CD4-positive, alpha-beta memory T cell (primary cell): ENCODE measurements at regions of chr5 and their contacts with region 1.

Region 1: GRCh38 chr5:160021831-160022446 is 13.0 kb downstream of the TTC1 start:
- DNase-seq: peak; percentile 58 to 70 (median 67)
- H3K4me3 ChIP-seq: no peak overlapping the region
- H3K4me3 Mint-ChIP-seq: peak overlapping the region in 5 of 8 donors; percentile 5 to 76 (median 55)
- H3K27ac ChIP-seq: no peak overlapping the region
- H3K27ac Mint-ChIP-seq: peak overlapping the region; percentile 39 to 95 (median 85)
- H3K4me1 ChIP-seq: peaks cover 21% of the 10 kb centered on the region
- H3K4me1 Mint-ChIP-seq: peaks cover 20 to 40% (median 30%) of the 10 kb centered on the region in 4 donors
- H3K27me3 ChIP-seq: no peaks in the 10 kb centered on the region
- H3K27me3 Mint-ChIP-seq: no peaks in the 10 kb centered on the region

Region 2: GRCh38 chr5:160008877-160009590 is 12.9 kb before region 1 on chr5 and contains the start of gene TTC1:
- CTCF ChIA-PET with region 1: interaction called, 48 read pairs
- POLR2A ChIA-PET with region 1: interaction called, 21 read pairs
- intact Hi-C with region 1: loop called (anchors 1 kb)
- DNase-seq: peak; percentile 89 to 96 (median 94)
- H3K4me3 ChIP-seq: peak within 1 kb of the TSS; percentile 85 to 96
- H3K4me3 Mint-ChIP-seq: peak within 1 kb of the TSS; percentile 94 to 100 (median 96)
- H3K27ac ChIP-seq: peak within 1 kb of the TSS; percentile 76
- H3K27ac Mint-ChIP-seq: peak within 1 kb of the TSS; percentile 88 to 99 (median 98)
- H3K4me1 ChIP-seq: peaks cover 30% of the 10 kb centered on the region
- H3K4me1 Mint-ChIP-seq: peaks cover 24 to 35% (median 29%) of the 10 kb centered on the region in 4 donors
- H3K27me3 ChIP-seq: no peaks in the 10 kb centered on the region
- H3K27me3 Mint-ChIP-seq: no peaks in the 10 kb centered on the region
- total RNA-seq, gene TTC1: 47.5 to 47.9 TPM

Region 3: DNA sequence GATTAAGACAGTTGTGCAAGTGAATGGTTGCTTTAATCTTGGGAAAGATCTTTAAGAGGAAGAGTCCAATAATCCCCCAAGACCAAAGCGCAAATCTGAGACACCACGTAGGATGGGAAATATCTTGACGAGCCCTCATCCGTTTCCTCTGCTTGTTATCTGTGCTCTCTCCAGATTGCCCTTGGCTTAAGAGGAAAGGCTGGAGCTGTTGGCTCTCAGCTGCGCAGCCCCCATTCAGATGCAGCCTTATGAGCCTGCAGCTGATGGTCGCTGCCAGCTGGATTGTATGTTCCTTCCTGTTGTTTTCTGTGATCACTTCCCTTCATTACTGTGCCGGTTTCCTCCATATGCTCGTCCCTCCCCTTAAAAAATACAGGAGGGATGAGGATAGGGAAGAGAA is 49.6 kb after region 1 on chr5:
- CTCF ChIA-PET with region 1: interaction called, 11 read pairs
- POLR2A ChIA-PET with region 1: interaction called, 3 read pairs
- intact Hi-C with region 1: no loop called
- DNase-seq: no peak
- H3K4me3 ChIP-seq: no peak overlapping the region
- H3K4me3 Mint-ChIP-seq: no peak overlapping the region
- H3K27ac ChIP-seq: no peak overlapping the region
- H3K27ac Mint-ChIP-seq: peak overlapping the region in 1 of 7 donors; percentile 44
- H3K4me1 ChIP-seq: no peaks in the 10 kb centered on the region
- H3K4me1 Mint-ChIP-seq: peaks cover 0 to 7% (median 0%) of the 10 kb centered on the region in 4 donors
- H3K27me3 ChIP-seq: no peaks in the 10 kb centered on the region
- H3K27me3 Mint-ChIP-seq: no peaks in the 10 kb centered on the region

Region 4: DNA sequence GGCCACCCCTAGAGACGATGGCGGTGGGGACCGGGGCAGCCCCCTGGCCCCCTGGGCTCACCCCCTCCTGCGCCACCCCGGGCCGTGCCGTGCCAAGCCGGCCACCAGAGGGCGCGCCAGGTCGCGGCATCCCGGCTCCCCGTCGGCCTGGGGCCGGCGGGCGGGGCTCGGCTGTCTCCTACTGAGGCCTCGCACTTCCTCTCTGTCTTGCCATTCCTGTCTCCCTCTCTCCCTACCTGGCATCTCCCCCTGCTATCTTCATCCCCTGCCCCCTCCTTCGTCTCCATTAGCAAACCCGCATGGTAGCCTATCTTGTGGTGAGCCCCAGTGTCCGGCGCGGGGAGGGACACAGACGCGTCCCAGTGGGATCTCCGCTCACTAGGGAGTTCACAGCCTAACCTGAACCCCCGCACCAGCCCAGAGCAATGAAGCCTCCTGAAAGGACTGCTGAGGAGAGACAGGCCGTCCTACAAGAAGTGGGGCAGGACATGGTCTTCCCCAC is 177.5 kb after region 1 on chr5:
- CTCF ChIA-PET with region 1: interaction called, 7 read pairs
- POLR2A ChIA-PET with region 1: no interaction called
- intact Hi-C with region 1: loop called (anchors 2 kb)
- DNase-seq: peak; percentile 44 to 66 (median 62)
- H3K4me3 ChIP-seq: peak overlapping the region in 1 of 2 donors; percentile 23
- H3K4me3 Mint-ChIP-seq: peak overlapping the region; percentile 51 to 87 (median 80)
- H3K27ac ChIP-seq: no peak overlapping the region
- H3K27ac Mint-ChIP-seq: peak overlapping the region in 2 of 7 donors; percentile 46 to 81
- H3K4me1 ChIP-seq: peaks cover 14% of the 10 kb centered on the region
- H3K4me1 Mint-ChIP-seq: peaks cover 0 to 10% (median 3%) of the 10 kb centered on the region in 4 donors
- H3K27me3 ChIP-seq: no peaks in the 10 kb centered on the region
- H3K27me3 Mint-ChIP-seq: peaks cover 5 to 17% of the 10 kb centered on the region in 2 donors

Region 5: DNA sequence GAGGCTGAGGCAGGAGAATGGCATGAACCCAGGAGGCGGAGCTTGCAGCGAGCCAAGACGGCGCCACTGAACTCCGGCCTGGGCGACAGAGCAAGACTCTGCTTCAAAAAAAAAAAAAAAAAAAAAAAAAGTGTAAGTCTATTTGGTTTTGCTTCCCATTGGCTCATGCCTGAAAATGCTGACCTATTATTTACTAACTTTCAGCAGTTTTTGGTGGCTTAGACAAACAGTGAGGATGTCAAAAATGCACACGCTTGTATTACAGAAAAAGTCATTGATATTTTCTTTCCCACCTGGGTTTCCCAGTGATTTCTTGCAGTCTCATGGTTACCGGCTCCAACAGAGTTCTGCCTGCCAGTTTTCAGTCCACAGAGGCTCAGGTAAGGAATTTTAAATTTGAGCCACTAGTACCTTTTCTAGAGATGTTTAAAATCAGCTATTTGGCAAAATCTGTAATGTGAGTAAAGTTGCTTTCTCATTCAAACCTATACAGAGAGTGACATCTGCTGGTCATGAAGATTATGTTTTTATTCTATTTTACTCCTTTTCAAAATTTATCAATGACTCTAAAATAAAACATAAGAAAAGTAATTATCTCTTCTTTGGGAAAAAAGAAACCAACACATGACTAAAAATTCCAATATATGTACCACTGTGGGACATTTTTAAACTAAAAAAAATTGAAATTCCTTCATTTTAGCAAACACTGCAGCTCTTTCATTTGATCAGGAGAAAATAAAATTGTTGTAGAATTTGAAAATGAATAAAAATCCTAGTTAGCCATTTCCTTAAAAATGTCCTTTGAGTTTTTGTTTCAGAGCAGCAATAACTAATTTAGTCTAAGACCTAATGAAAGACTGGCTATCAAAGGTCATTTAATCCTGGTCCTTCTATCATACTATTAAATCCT is 369.1 kb after region 1 on chr5:
- CTCF ChIA-PET with region 1: interaction called, 13 read pairs
- POLR2A ChIA-PET with region 1: no interaction called
- intact Hi-C with region 1: loop called (anchors 1 kb)
- DNase-seq: peak in 3 of 5 donors; percentile 7 to 20 (median 13)
- H3K4me3 ChIP-seq: no peak overlapping the region
- H3K4me3 Mint-ChIP-seq: no peak overlapping the region
- H3K27ac ChIP-seq: no peak overlapping the region
- H3K27ac Mint-ChIP-seq: no peak overlapping the region
- H3K4me1 ChIP-seq: no peaks in the 10 kb centered on the region
- H3K4me1 Mint-ChIP-seq: peaks cover 0 to 2% (median 0%) of the 10 kb centered on the region in 4 donors
- H3K27me3 ChIP-seq: no peaks in the 10 kb centered on the region
- H3K27me3 Mint-ChIP-seq: peaks cover 0 to 2% of the 10 kb centered on the region in 2 donors

Region 6: DNA sequence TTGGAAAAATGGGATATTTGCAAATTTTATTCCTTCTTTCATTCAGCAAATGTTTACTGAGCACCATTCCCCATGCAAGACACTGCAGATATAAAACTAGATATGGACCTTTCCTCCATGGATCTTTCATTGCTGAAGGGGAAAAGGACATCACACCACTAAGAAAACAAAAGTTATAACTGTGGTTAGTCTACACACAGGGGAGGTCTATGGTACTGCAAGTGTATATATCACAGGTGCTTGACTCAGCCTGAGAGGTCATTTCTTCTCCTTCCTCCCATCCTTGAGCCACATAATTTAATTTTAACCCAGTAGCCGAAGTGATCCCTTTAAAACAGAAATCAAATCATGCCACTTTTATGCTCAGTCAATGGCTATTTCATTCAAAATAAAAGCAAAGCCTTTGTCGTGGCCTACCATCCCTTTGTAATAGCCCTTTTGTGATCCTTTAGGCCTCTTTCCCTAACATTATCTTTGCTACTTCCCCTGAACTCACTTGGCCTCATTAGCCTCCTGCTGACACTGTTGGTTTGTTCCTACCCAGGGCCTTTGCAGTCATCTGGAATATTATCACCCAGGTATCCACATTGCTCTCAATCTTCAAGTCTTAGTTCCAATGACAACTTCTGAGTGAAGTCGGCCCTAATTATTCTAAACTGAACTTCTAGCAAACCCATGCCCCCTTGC is 1311.4 kb after region 1 on chr5:
- CTCF ChIA-PET with region 1: no interaction called
- POLR2A ChIA-PET with region 1: no interaction called
- intact Hi-C with region 1: no loop called
- DNase-seq: no peak
- H3K4me3 ChIP-seq: no peak overlapping the region
- H3K4me3 Mint-ChIP-seq: no peak overlapping the region
- H3K27ac ChIP-seq: no peak overlapping the region
- H3K27ac Mint-ChIP-seq: no peak overlapping the region
- H3K4me1 ChIP-seq: no peaks in the 10 kb centered on the region
- H3K4me1 Mint-ChIP-seq: no peaks in the 10 kb centered on the region
- H3K27me3 ChIP-seq: no peaks in the 10 kb centered on the region
- H3K27me3 Mint-ChIP-seq: peaks cover 0 to 3% of the 10 kb centered on the region in 2 donors